ENCODE measurements at regions of chr4 and their contacts with region 1.

Region 1: DNA sequence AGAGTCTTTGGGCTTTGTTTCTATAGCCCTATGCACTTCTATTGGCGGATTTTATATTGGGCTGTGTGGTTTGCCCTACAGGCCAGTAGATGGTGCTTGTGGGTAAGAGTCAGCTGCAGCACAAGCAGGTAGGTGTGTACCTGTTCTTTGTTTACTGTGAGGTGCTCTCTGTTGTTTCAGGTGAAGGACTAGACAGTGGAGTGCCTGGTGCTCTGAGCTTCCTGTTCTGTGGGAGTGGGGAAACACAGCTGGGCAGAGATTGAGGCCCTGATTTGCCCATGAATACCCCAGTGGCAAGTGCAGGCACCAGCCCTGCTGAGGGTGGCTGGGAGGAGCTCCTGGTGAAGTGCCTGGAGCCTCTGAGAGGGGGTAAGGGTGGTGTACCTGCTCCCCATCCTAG is 26.3 kb upstream of the UCP1 start:
- DNase-seq: peak; percentile 7 to 43 (median 41)
- H3K4me3 ChIP-seq: no peak overlapping the region
- H3K27ac ChIP-seq: no peak overlapping the region
- H3K4me1 ChIP-seq: no peaks in the 10 kb centered on the region
- H3K27me3 ChIP-seq: no peaks in the 10 kb centered on the region

Region 2: DNA sequence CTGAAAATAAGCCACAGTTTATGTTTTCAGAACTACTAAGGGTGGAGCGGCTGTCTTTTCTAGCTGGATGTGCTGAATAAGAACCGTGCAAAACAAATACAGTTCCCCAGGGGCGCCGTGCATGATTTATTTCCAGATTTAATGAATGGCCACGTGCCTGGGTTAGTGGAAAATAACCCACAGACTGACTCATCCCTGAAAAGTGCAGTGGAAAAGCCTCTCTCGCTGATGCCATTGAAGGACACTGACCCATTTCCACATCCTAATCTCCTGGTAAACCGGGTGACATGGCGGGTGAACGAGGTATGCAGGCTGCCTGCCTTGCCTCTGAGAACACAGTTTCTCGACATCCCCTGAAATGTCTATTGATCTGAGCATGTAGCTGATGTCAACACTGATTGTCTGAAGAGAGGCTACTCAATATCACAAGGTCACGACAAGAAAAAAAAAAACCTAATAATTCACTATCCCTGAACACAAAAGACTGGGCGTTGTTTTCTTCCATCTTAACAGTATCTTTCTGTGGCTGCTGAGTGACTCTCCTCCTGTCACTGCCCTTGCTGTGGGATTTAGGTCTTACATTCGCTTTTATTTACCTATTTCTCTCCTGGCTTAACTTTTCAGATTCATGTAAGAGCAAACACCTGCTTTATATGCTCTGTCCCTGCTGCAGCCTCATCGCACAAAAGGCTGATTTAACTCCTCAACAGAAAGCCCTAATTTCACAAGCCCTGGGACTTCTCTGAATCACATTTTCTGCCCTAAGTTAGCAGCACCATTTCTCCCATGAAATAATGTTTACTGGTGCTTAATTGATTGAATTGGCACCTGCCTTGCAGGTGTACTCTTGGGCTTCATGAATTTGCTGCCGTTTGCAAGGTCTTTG is 298.5 kb before region 1 on chr4:
- CTCF ChIA-PET with region 1: no interaction called
- POLR2A ChIA-PET with region 1: no interaction called
- DNase-seq: no peak
- H3K4me3 ChIP-seq: no peak overlapping the region
- H3K27ac ChIP-seq: no peak overlapping the region
- H3K4me1 ChIP-seq: peaks cover 0 to 12% (median 10%) of the 10 kb centered on the region in 4 experiments
- H3K27me3 ChIP-seq: no peaks in the 10 kb centered on the region

Region 3: DNA sequence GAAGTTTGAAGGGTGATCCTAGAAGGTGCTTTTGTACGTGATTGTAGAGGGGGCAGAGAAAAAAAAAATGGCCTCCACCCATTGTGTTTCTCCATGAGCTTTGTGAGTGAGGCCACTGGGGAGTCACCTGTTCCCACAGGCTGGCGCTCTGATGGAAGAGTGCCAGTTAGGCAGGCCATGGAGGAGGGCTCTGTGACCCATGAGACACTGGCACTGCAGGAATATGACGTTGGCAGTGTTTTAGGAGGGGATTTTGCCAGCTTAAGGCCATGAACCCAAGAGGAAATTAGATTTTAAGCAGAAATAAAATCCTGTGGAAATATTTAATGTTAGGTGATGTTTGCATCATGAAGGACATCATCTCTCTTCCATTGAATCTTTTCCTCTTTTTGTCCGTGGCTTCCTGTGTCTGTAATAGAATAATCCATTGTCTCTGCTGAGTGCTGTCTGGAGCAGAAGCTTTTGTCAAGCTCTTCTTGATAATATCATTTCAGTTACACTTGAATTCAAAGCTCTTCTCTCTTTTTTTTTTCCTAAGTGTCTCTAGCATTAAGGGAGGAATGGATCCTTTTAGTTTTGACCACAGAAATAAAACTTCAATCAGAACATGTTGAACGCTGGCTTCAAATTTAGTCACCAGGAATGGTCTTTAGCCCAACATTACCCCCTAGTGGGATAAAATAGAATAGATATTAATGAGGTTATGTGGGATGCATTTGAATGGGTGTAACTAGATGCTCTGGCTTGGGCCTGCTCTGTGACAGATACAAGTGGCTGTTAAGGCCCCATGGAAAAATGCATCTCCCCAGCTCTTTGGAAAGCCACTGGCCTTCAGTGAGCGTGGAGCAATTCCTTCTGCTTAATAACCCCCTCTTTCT is 14.7 kb after region 1 on chr4:
- CTCF ChIA-PET with region 1: interaction called, 10 read pairs
- POLR2A ChIA-PET with region 1: no interaction called
- DNase-seq: peak; percentile 50 to 68 (median 61)
- H3K4me3 ChIP-seq: no peak overlapping the region
- H3K27ac ChIP-seq: no peak overlapping the region
- H3K4me1 ChIP-seq: peaks cover 0 to 8% (median 3%) of the 10 kb centered on the region in 4 experiments
- H3K27me3 ChIP-seq: no peaks in the 10 kb centered on the region

Measured in common myeloid progenitor, CD34-positive (primary cell).